ENCODE measurements at regions of chr10 and their contacts with region 1.

Region 1: DNA sequence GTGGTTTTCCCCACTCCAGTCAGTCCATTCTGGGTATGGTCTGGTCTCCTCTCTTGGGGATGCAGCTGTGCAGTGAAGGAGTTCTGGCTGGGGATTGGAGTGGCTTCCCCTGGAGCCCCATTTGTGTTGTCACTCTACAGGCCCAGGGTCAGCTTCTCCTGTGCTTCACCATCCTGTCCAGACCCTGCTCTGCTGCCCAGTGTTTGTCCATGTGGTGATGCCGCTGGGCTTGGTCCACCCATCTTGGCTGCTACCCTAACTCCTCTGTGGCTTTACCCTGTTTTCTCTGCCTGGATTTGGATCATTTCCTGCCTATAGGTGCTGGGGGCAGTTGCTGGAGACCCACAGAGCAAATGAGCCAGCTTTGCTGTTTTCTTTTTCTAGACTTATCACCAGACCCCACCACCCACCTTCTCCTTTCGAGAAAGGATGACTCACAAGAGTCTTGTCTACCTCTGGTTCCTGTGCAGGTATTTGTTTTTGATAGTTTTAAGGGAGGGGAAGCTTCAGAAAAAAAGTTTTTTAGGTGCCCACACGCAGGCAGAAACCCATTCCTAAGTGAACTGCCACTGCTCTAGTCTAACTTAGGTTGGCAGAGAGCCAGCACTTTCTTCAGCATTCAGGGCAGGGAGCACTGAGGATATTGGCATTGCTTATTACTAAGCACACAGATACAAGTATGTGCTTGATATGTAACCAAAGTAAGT is 8.5 kb downstream of the ZDHHC16 start:
- DNase-seq: peak; percentile 35
- H3K4me3 ChIP-seq: no peak overlapping the region
- H3K27ac ChIP-seq: no peak overlapping the region
- H3K4me1 ChIP-seq: peaks cover 16% of the 10 kb centered on the region
- H3K27me3 ChIP-seq: no peaks in the 10 kb centered on the region
- CTCF ChIP-seq: no peak

Region 2: GRCh38 chr10:97109547-97109946 is 344.9 kb before region 1 on chr10:
- CTCF ChIA-PET with region 1: interaction called, 24 read pairs
- dilution Hi-C with region 1: no loop called
- in situ Hi-C with region 1: no loop called
- intact Hi-C with region 1: no loop called
- DNase-seq: no peak
- H3K4me3 ChIP-seq: no peak overlapping the region
- H3K27ac ChIP-seq: no peak overlapping the region
- H3K4me1 ChIP-seq: no peaks in the 10 kb centered on the region
- H3K27me3 ChIP-seq: no peaks in the 10 kb centered on the region
- CTCF ChIP-seq: no peak

Measured in mammary epithelial cell (primary cell).